ENCODE measurements at regions of chrX and their contacts with region 1.

Region 1: GRCh38 chrX:100636321-100636991 is at the start of gene TSPAN6:
- DNase-seq: peak; percentile 82
- H3K4me3 ChIP-seq: peak within 1 kb of the TSS; percentile 61 to 69
- H3K27ac ChIP-seq: peak within 1 kb of the TSS; percentile 10 to 60; a peak in 3 of 4 replicates
- H3K4me1 ChIP-seq: peaks cover 0 to 3% of the 10 kb centered on the region in 2 experiments; a peak in 1 of 4 replicates
- H3K27me3 ChIP-seq: no peaks in the 10 kb centered on the region; the same call in 1 of the 2 replicates
- CTCF ChIP-seq: peak; percentile 65
- EP300 ChIP-seq: no peak
- RAD21 ChIP-seq: peak; percentile 45
- polyA plus RNA-seq, gene TSPAN6: 20.9 and 21.7 TPM in 2 replicates

Region 2: GRCh38 chrX:100512471-100512870 is 124.0 kb before region 1 on chrX:
- CTCF ChIA-PET with region 1: interaction called, 11 read pairs
- POLR2A ChIA-PET with region 1: no interaction called
- DNase-seq: peak; percentile 32
- H3K4me3 ChIP-seq: no peak overlapping the region
- H3K27ac ChIP-seq: no peak overlapping the region
- H3K4me1 ChIP-seq: no peaks in the 10 kb centered on the region
- H3K27me3 ChIP-seq: no peaks in the 10 kb centered on the region; the same call in 1 of the 2 replicates
- CTCF ChIP-seq: peak; percentile 62
- EP300 ChIP-seq: no peak
- RAD21 ChIP-seq: peak; percentile 54

Region 3: GRCh38 chrX:100615005-100615404 is 21.5 kb before region 1 on chrX:
- CTCF ChIA-PET with region 1: interaction called, 10 read pairs
- POLR2A ChIA-PET with region 1: no interaction called
- DNase-seq: peak; percentile 37
- H3K4me3 ChIP-seq: no peak overlapping the region
- H3K27ac ChIP-seq: no peak overlapping the region
- H3K4me1 ChIP-seq: no peaks in the 10 kb centered on the region
- H3K27me3 ChIP-seq: no peaks in the 10 kb centered on the region
- CTCF ChIP-seq: peak; percentile 63
- EP300 ChIP-seq: no peak
- RAD21 ChIP-seq: peak; percentile 20; the same call in 1 of the 2 replicates

Region 4: GRCh38 chrX:100649550-100650356 is 13.3 kb after region 1 on chrX:
- CTCF ChIA-PET with region 1: interaction called, 16 read pairs
- POLR2A ChIA-PET with region 1: interaction called, 3 read pairs
- DNase-seq: no peak
- H3K4me3 ChIP-seq: no peak overlapping the region
- H3K27ac ChIP-seq: no peak overlapping the region
- H3K4me1 ChIP-seq: 0 out of 4 replicates have a peak, but pooled peaks cover 0 to 6% of the 10 kb centered on the region in 2 experiments
- H3K27me3 ChIP-seq: 0 out of 2 replicates have a peak, but pooled peaks cover 4% of the 10 kb centered on the region
- CTCF ChIP-seq: no peak
- EP300 ChIP-seq: no peak
- RAD21 ChIP-seq: no peak

Region 5: GRCh38 chrX:100720301-100720700 is 83.8 kb after region 1 on chrX:
- CTCF ChIA-PET with region 1: no interaction called
- POLR2A ChIA-PET with region 1: no interaction called
- DNase-seq: no peak
- H3K4me3 ChIP-seq: no peak overlapping the region
- H3K27ac ChIP-seq: no peak overlapping the region
- H3K4me1 ChIP-seq: no peaks in the 10 kb centered on the region
- H3K27me3 ChIP-seq: no peaks in the 10 kb centered on the region
- CTCF ChIP-seq: no peak
- EP300 ChIP-seq: no peak
- RAD21 ChIP-seq: no peak